ENCODE measurements at regions of chr12 and their contacts with region 1.

Region 1: DNA sequence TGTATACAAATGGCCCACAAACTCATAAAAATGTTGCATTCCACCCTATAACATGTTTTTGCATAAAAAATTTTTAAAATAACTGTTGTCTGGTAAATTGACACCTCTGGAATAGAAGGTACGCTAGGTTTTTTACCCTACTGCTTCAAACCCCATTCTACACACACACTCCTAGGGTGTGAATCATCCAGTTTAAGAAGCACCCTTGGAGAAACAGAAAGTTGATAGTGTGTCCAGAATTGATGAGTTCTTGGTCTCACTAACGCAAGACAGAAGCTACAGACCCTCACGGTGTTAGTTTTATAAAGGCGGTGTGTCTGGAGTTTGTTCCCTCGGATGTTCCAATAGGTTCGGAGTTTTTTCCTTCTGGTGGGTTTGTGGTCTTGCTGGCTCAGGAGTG is 158.5 kb downstream of the KLRB1 start:
- DNase-seq: no peak
- H3K4me3 Mint-ChIP-seq: peak overlapping the region; percentile 95
- H3K27ac Mint-ChIP-seq: no peak overlapping the region
- H3K4me1 Mint-ChIP-seq: peaks cover 20% of the 10 kb centered on the region
- H3K27me3 Mint-ChIP-seq: peaks cover 4% of the 10 kb centered on the region

Region 2: DNA sequence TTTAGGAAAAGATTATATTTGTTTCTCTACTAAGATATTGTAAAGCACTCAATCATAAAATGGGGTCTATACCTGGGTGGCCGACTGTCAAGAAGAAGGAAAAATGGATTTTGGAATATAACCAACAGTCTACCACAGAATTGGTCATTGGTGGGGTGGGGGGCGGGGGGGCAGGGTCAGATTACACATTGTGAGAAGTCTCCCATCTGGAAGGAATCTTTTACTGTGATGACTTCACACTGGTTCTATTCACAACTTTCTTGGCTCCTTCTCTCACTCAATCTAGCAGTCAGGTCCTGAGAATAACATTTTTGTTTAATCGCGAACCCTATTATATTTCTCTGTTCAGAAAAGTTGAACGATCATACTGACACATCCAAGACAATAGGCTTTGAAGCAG is 899.8 kb before region 1 on chr12:
- intact Hi-C with region 1: loop called (anchors 5 kb)
- DNase-seq: no peak
- H3K4me3 Mint-ChIP-seq: no peak overlapping the region
- H3K27ac Mint-ChIP-seq: no peak overlapping the region
- H3K4me1 Mint-ChIP-seq: no peaks in the 10 kb centered on the region
- H3K27me3 Mint-ChIP-seq: peaks cover 25% of the 10 kb centered on the region

Measured in activated T-helper 1 cell treated with anti-CD3 and anti-CD28 coated beads, Interleukin-12 subunit alpha, Interleukin-12 subunit beta, Interleukin-2, Interleukin-4 antibody, amounts not matched to agents 30 ng/mL and 10 ng/mL and 1 ng/mL, durations not matched to agents 14 hours and 24 hours and 36 hours (primary cell).